Prostate gland (tissue), 2 donors: ENCODE measurements at regions of chr11 and their contacts with region 1.

Region 1: DNA sequence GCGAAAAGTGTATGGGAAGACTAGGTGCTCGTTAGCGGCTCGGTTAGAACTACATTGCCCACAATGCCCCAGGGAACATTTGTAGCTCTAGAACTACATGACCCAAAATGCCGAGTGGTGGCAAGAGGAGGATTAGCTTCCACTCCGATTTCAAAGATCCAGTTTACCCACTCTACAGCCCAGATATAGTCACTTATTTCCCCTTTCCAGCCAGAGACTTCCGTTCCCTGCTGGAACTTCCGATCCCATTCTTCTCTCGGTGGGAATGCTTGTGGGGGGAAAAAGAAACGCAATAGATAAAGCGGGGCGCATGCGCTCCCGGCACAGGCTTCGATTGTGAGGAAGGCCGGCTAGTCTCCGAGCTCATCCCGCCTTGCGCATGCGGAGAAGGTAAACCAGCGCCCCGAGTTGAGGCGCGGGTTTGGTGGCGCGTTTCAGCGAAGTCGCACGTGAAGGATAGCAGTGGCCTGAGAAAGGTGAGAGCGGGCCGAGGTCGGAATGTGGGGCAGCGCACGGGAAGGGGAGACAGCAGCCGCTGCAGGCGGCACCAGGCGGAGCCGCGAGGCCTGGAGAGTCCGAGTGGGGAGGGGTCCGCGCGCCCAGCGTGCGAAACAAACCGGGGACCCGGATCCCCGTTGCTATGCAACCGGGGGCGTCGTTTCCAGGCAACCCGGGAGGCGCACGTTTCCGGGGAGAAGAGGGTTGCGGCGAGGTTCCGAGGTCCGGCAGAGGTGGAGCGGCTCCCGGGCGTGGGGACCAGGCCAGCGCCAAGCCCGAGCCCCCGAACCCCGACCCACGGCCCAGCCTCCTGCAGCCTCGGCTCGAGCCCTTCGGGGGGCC is at the start of gene TMEM109:
- DNase-seq: peak; percentile 90
- H3K4me3 ChIP-seq: peak within 1 kb of the TSS; percentile 75 to 77
- H3K27ac ChIP-seq: peak within 1 kb of the TSS; percentile 94
- H3K4me1 ChIP-seq: peaks cover 21% of the 10 kb centered on the region
- H3K27me3 ChIP-seq: no peaks in the 10 kb centered on the region
- CTCF ChIP-seq: peak in 2 of 4 experiments; percentile 22 to 23
- POLR2A ChIP-seq: peak; percentile 57
- total RNA-seq, gene TMEM109: 106 to 122 TPM

Region 2: GRCh38 chr11:60970369-60970774 is 56.4 kb after region 1 on chr11:
- intact Hi-C with region 1: no loop called
- DNase-seq: no peak
- H3K4me3 ChIP-seq: no peak overlapping the region
- H3K27ac ChIP-seq: no peak overlapping the region
- H3K4me1 ChIP-seq: no peaks in the 10 kb centered on the region
- H3K27me3 ChIP-seq: no peaks in the 10 kb centered on the region
- CTCF ChIP-seq: peak; percentile 31 to 81 (median 72)
- POLR2A ChIP-seq: no peak

Region 3: DNA sequence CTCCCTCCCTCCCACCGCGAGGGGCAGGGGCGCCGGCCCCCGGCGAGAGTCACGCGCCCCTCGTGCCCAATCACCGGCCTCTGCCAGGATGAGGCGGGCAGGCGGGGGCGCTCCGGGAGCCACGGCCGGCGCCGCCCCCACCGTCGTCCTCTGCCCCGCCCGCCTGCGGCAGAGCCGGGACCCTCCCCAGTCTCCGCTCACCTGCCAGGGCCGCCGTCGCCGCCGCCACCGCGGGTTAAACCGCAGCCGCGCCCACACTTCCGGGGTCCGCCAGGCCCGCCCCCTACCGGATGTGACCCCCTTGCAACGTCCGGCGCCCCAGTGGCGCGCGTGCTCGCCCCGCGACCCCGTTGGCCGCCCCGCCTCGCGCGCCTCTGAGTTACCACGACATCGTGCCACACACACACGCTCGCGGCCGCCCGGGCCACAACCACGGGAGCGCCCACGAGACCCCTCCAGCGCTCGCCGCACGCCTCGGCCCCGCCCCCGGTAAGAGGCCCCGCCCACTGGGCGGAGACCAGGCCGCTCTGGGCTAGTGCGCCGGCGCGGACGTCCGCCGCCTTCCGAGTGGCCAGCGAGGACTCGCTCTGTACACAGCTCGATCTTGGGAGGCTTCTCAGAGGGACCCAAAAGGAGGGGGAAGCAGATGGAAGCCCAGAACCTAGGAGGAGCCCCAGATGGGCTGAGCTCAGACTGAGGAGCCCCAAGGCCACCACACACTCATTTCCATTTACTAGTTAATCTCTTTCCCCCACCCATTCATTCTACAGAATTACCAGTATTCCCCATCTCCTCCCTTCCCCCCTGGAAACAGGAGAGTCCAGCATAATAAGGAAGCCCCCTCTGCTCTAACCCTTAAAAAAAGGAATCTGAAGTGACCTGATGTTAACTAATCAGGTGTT is 247.4 kb after region 1 on chr11 and contains the start of gene VPS37C:
- intact Hi-C with region 1: loop called (anchors 5 kb)
- DNase-seq: peak; percentile 85
- H3K4me3 ChIP-seq: peak within 1 kb of the TSS; percentile 86 to 87
- H3K27ac ChIP-seq: peak within 1 kb of the TSS; percentile 99
- H3K4me1 ChIP-seq: peaks cover 5% of the 10 kb centered on the region
- H3K27me3 ChIP-seq: no peaks in the 10 kb centered on the region
- CTCF ChIP-seq: peak; percentile 34 to 65 (median 45)
- POLR2A ChIP-seq: peak; percentile 70
- total RNA-seq, gene VPS37C: 32.2 to 38.8 TPM